OCI-LY7 (cell line): ENCODE measurements at regions of chr11 and their contacts with region 1.

Region 1: DNA sequence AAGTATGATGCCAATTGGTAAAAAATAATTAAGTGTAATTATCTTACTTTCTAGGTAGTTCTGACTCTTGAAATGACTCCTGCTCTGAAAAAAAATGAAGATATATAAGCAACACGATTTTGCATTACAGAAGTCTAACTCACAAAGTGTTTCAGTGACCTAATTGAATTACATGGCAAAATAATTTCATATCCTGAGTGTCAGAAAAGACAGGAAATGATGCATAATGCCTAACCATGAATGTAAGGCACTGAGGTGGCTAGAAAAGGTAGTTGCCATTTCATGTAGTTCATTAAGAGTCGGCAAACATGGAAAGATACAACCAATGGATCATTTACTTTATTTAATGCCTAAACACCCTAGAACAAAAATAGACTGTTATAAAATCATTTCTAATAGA is 113.5 kb downstream of the GUCY1A2 start:
- DNase-seq: no peak
- H3K4me3 ChIP-seq: no peak overlapping the region
- H3K27ac ChIP-seq: no peak overlapping the region
- H3K4me1 ChIP-seq: no peaks in the 10 kb centered on the region
- CTCF ChIP-seq: no peak

Region 2: DNA sequence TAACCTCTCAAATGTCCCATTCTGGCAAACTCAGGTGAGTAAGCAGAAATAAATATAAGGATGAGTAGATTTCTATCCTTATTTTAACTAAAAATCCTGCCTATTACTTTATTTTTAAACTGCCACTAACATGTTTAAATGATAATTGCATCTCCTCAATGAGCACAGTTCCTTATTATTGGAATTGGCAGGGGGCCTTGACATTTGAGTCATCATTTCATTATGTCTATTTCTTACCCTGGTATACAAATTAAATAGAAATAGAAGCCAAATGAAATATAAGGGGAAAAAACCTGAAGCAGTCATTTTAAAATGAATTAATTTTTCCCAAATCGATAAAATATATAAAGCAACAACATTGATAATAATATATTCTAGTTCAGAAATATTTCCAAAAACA is 32.3 kb after region 1 on chr11:
- CTCF ChIA-PET with region 1: no interaction called
- POLR2A ChIA-PET with region 1: no interaction called
- intact Hi-C with region 1: loop called (anchors 1 kb)
- DNase-seq: no peak
- H3K4me3 ChIP-seq: no peak overlapping the region
- H3K27ac ChIP-seq: no peak overlapping the region
- H3K4me1 ChIP-seq: no peaks in the 10 kb centered on the region
- CTCF ChIP-seq: no peak